Activated T-helper 1 cell treated with anti-CD3 and anti-CD28 coated beads, Interleukin-12 subunit alpha, Interleukin-12 subunit beta, Interleukin-2, Interleukin-4 antibody, amounts not matched to agents 30 ng/mL and 10 ng/mL and 1 ng/mL, durations not matched to agents 14 hours and 24 hours and 36 hours (primary cell): ENCODE measurements at regions of chr6 and their contacts with region 1.

Region 1: DNA sequence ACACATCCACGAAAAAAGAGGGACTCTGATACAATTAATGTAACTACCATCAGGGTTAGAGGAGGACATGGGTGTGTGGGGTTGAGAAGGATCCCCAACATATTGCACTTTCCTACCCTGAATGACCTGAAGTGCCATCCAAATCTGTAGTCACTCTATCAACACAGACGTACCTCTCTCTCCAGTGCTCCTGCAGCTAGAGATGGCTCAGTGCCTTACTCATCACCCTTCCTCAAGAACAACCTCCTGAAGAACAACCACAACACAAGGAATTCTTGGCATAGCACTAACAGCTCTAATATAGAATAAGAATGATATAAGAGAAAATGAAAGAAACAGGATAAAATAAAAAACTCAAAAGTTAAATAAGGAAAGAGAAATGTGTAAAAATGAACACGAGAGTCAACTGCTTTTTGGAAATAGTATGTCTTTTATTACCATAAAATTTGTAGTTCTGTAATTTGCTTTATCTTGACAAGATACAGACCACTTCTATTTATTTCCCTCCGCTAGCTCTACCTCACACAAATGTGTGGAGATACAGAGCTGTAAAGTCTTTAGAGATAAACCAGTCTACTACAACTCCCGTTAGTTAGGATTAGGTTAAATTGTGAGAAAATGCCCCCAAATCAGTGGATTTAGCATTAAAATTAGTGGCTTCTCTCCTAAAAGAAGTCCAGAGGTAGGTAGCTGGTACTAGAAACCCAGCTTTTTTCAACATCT is 63.9 kb downstream of the REV3L start:
- DNase-seq: no peak
- H3K4me3 Mint-ChIP-seq: no peak overlapping the region
- H3K27ac Mint-ChIP-seq: no peak overlapping the region
- H3K4me1 Mint-ChIP-seq: peaks cover 19% of the 10 kb centered on the region
- H3K27me3 Mint-ChIP-seq: no peaks in the 10 kb centered on the region

Region 2: GRCh38 chr6:111406200-111406721 is 12.9 kb before region 1 on chr6:
- intact Hi-C with region 1: loop called (anchors 1 kb)
- DNase-seq: no peak
- H3K4me3 Mint-ChIP-seq: no peak overlapping the region
- H3K27ac Mint-ChIP-seq: peak overlapping the region; percentile 45
- H3K4me1 Mint-ChIP-seq: peaks cover 30% of the 10 kb centered on the region
- H3K27me3 Mint-ChIP-seq: no peaks in the 10 kb centered on the region

Region 3: DNA sequence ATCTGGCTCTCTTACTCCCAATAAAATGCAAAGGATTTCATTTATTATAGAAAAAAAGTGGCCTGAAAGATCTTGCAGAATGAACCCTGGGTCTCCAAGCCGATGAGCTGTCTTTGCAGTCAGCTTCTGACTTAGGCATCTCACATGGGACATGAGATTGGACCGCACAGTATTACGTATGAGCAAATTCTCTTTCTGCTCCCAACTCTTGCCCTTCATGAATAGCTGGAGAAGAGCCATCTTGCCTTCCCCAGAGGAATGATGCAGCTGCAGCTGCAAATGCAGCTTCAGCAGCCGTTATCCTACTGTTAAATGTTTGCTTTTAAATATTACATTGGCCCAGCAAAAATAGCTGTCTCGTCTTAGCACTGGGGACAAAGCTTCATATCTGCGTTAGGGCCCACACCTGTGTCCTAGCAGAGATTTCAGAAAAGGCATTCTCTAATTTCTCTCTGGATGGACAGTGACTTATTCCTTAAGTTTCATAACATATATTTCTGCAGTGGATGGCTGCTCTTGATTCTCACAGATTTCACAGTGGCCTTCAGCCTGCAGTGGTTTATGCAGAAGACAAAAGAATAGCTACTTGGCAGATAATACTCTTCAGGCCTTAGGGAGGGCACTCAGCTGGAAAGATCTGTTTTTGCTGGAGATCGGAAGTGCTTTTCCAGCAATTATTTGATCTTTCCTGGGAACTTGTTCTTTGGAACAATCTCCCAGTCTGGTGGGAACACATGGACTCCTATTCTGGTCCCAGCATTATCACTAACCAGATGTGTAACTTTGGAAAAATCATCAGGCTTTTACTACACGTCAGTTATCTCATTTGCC is 324.9 kb after region 1 on chr6:
- intact Hi-C with region 1: no loop called
- DNase-seq: no peak
- H3K4me3 Mint-ChIP-seq: no peak overlapping the region
- H3K27ac Mint-ChIP-seq: no peak overlapping the region
- H3K4me1 Mint-ChIP-seq: peaks cover 78% of the 10 kb centered on the region
- H3K27me3 Mint-ChIP-seq: no peaks in the 10 kb centered on the region